ENCODE measurements at regions of chr20 and their contacts with region 1.

Region 1: GRCh38 chr20:4130404-4131189 is 115.2 kb upstream of the RNF24 start:
- DNase-seq: peak; percentile 55
- H3K4me3 Mint-ChIP-seq: peak overlapping the region; percentile 42
- H3K27ac Mint-ChIP-seq: peak overlapping the region; percentile 96
- H3K4me1 Mint-ChIP-seq: peaks cover 47% of the 10 kb centered on the region
- H3K27me3 Mint-ChIP-seq: peaks cover 4% of the 10 kb centered on the region

Region 2: GRCh38 chr20:4108495-4109306 is 21.9 kb before region 1 on chr20:
- intact Hi-C with region 1: loop called (anchors 1 kb)
- DNase-seq: peak; percentile 66
- H3K4me3 Mint-ChIP-seq: no peak overlapping the region
- H3K27ac Mint-ChIP-seq: no peak overlapping the region
- H3K4me1 Mint-ChIP-seq: peaks cover 29% of the 10 kb centered on the region
- H3K27me3 Mint-ChIP-seq: no peaks in the 10 kb centered on the region

Region 3: GRCh38 chr20:4119854-4120209 is 10.8 kb before region 1 on chr20:
- intact Hi-C with region 1: loop called (anchors 1 kb)
- DNase-seq: no peak
- H3K4me3 Mint-ChIP-seq: no peak overlapping the region
- H3K27ac Mint-ChIP-seq: peak overlapping the region; percentile 29
- H3K4me1 Mint-ChIP-seq: peaks cover 28% of the 10 kb centered on the region
- H3K27me3 Mint-ChIP-seq: peaks cover 10% of the 10 kb centered on the region

Region 4: GRCh38 chr20:4152006-4152695 is 21.6 kb after region 1 on chr20:
- intact Hi-C with region 1: loop called (anchors 1 kb)
- DNase-seq: no peak
- H3K4me3 Mint-ChIP-seq: peak overlapping the region; percentile 60
- H3K27ac Mint-ChIP-seq: peak overlapping the region; percentile 5
- H3K4me1 Mint-ChIP-seq: peaks cover 25% of the 10 kb centered on the region
- H3K27me3 Mint-ChIP-seq: peaks cover 10% of the 10 kb centered on the region

Region 5: DNA sequence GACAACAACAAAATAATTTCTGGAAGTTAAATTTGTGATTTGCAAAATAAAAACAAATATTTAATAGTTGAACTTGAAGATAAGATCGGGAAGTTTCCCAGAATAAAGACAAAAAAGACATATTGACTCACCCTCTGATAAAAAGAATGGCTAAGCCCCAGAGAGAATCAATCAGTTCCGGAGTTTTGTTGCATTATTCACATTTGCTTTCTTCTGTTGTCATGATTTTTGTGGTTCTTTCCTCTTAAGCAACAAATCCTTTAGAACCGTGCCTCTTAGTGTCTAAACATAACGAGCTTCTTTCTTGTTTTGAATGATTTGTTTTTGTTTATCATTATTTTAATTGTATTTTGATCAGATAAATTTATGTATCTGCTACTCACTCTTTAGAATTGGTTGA is 253.4 kb after region 1 on chr20:
- intact Hi-C with region 1: no loop called
- DNase-seq: no peak
- H3K4me3 Mint-ChIP-seq: no peak overlapping the region
- H3K27ac Mint-ChIP-seq: no peak overlapping the region
- H3K4me1 Mint-ChIP-seq: peaks cover 2% of the 10 kb centered on the region
- H3K27me3 Mint-ChIP-seq: peaks cover 45% of the 10 kb centered on the region